ENCODE measurements at regions of chr15 and their contacts with region 1.

Region 1: GRCh38 chr15:38690689-38691332 is 126.2 kb upstream of the RASGRP1 start:
- DNase-seq: peak; percentile 88
- ATAC-seq: peak; percentile 38
- H3K4me3 Mint-ChIP-seq: no peak overlapping the region
- H3K27ac Mint-ChIP-seq: peak overlapping the region; percentile 62
- H3K4me1 Mint-ChIP-seq: peaks cover 71% of the 10 kb centered on the region
- H3K27me3 Mint-ChIP-seq: no peaks in the 10 kb centered on the region
- CTCF ChIP-seq: peak; percentile 91

Region 2: GRCh38 chr15:38362355-38362754 is 328.5 kb before region 1 on chr15:
- CTCF ChIA-PET with region 1: no interaction called
- POLR2A ChIA-PET with region 1: no interaction called
- intact Hi-C with region 1: no loop called
- DNase-seq: no peak
- ATAC-seq: no peak
- H3K4me3 Mint-ChIP-seq: no peak overlapping the region
- H3K27ac Mint-ChIP-seq: no peak overlapping the region
- H3K4me1 Mint-ChIP-seq: no peaks in the 10 kb centered on the region
- H3K27me3 Mint-ChIP-seq: peaks cover 18% of the 10 kb centered on the region
- CTCF ChIP-seq: no peak

Region 3: DNA sequence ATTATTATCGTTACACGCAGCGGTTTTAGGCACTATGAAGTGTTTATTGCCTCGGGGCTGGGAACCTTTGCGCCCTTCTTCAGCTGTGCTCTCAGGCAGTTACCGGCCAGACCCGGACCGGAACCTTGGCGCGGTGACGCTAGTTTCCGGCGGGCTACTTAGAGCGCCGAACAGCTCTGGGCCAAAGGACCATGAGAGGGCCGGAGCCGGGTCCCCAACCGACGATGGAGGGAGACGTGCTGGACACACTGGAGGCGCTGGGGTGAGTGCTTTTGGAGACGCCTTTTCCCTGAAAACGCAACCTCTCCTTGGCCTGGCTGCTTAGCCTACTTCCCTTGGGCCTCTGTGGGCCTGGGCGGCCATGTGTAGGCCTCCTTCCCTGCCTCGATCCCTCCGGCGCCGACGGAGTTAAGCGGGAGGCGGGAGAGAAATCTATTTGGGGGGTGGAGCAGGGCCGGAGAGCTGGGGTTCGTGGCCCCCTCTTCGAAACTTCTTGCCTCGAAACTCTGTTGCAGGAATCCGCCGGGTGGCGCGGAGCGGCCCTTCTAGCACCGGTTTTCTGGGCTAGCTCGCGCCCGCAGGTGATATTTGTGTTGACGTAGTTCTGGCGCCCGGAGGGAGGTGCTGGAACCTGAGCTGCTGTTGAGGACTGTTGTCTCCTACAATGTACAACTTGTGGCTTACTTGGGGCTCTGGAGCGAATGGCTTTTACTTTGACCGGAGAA is 236.7 kb before region 1 on chr15 and contains the start of gene FAM98B:
- CTCF ChIA-PET with region 1: interaction called, 63 read pairs
- POLR2A ChIA-PET with region 1: interaction called, 15 read pairs
- intact Hi-C with region 1: no loop called
- DNase-seq: peak; percentile 89
- ATAC-seq: peak; percentile 95
- H3K4me3 Mint-ChIP-seq: peak within 1 kb of the TSS; percentile 95
- H3K27ac Mint-ChIP-seq: peak within 1 kb of the TSS; percentile 93
- H3K4me1 Mint-ChIP-seq: peaks cover 30% of the 10 kb centered on the region
- H3K27me3 Mint-ChIP-seq: no peaks in the 10 kb centered on the region
- CTCF ChIP-seq: no peak
- total RNA-seq, gene FAM98B: 51.0 to 61.8 TPM

Region 4: GRCh38 chr15:38496151-38496550 is 194.7 kb before region 1 on chr15:
- CTCF ChIA-PET with region 1: interaction called, 38 read pairs
- POLR2A ChIA-PET with region 1: interaction called, 5 read pairs
- intact Hi-C with region 1: no loop called
- DNase-seq: no peak
- ATAC-seq: no peak
- H3K4me3 Mint-ChIP-seq: no peak overlapping the region
- H3K27ac Mint-ChIP-seq: peak overlapping the region; percentile 84
- H3K4me1 Mint-ChIP-seq: peaks cover 30% of the 10 kb centered on the region
- H3K27me3 Mint-ChIP-seq: no peaks in the 10 kb centered on the region
- CTCF ChIP-seq: no peak

Region 5: DNA sequence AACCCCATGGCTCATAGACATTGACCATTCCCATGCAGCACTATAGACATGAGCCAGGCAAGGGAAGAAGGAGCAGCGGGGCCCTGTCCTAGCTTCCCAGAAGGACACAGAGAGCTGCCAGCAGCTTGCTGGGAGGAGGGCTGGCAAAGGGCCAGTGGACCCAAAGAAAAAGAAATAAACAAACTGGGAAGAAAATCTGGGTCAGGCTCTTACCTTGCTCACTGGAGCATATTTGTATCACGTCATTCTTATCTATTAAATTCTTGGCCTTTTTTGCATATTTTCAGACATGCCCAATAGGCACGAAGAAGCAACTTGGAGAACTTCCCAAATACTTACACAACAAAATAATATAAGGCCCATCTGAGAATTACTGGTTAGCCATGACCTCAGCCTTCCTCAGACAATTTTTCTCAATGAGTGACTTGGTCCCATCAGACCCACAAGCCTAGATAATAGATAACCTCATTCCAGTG is 154.6 kb before region 1 on chr15:
- CTCF ChIA-PET with region 1: interaction called, 68 read pairs
- POLR2A ChIA-PET with region 1: interaction called, 16 read pairs
- intact Hi-C with region 1: no loop called
- DNase-seq: no peak
- ATAC-seq: no peak
- H3K4me3 Mint-ChIP-seq: no peak overlapping the region
- H3K27ac Mint-ChIP-seq: peak overlapping the region; percentile 97
- H3K4me1 Mint-ChIP-seq: peaks cover 98% of the 10 kb centered on the region
- H3K27me3 Mint-ChIP-seq: no peaks in the 10 kb centered on the region
- CTCF ChIP-seq: no peak

Region 6: GRCh38 chr15:38610748-38611147 is 80.1 kb before region 1 on chr15:
- CTCF ChIA-PET with region 1: interaction called, 62 read pairs
- POLR2A ChIA-PET with region 1: interaction called, 23 read pairs
- intact Hi-C with region 1: loop called (anchors 5 kb)
- DNase-seq: peak; percentile 84
- ATAC-seq: peak; percentile 64
- H3K4me3 Mint-ChIP-seq: peak overlapping the region; percentile 5
- H3K27ac Mint-ChIP-seq: peak overlapping the region; percentile 89
- H3K4me1 Mint-ChIP-seq: peaks cover 73% of the 10 kb centered on the region
- H3K27me3 Mint-ChIP-seq: no peaks in the 10 kb centered on the region
- CTCF ChIP-seq: no peak

Region 7: GRCh38 chr15:38671675-38672254 is 19.0 kb before region 1 on chr15:
- CTCF ChIA-PET with region 1: interaction called, 111 read pairs
- POLR2A ChIA-PET with region 1: interaction called, 94 read pairs
- intact Hi-C with region 1: loop called (anchors 2 kb)
- DNase-seq: peak; percentile 72
- ATAC-seq: peak; percentile 61
- H3K4me3 Mint-ChIP-seq: peak overlapping the region; percentile 62
- H3K27ac Mint-ChIP-seq: peak overlapping the region; percentile 95
- H3K4me1 Mint-ChIP-seq: peaks cover 75% of the 10 kb centered on the region
- H3K27me3 Mint-ChIP-seq: no peaks in the 10 kb centered on the region
- CTCF ChIP-seq: no peak

Region 8: DNA sequence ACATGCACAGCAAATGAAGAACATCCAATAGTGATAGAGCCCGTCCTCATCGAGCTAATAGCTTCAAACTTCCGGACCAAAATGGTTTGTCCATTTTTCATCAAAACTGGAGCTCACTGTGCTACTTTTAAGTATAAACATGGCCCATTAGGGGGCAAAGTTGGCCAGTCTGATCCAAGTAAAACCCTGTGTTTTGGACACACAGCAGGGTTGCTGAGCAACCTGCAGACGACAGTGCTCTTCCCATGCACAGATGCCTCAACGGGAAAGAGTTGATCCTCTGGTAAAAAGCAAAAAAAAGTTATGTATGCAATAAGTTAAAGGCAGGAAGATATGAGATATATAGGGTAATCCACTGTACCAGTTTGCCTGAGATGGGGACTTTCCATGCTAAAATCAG is 646.1 kb after region 1 on chr15:
- CTCF ChIA-PET with region 1: no interaction called
- POLR2A ChIA-PET with region 1: no interaction called
- intact Hi-C with region 1: no loop called
- DNase-seq: no peak
- ATAC-seq: no peak
- H3K4me3 Mint-ChIP-seq: no peak overlapping the region
- H3K27ac Mint-ChIP-seq: no peak overlapping the region
- H3K4me1 Mint-ChIP-seq: no peaks in the 10 kb centered on the region
- H3K27me3 Mint-ChIP-seq: peaks cover 3% of the 10 kb centered on the region
- CTCF ChIP-seq: no peak